Activated T-helper 2 cell treated with anti-CD3 and anti-CD28 coated beads, Interferon-gamma antibody, Interleukin-2, Interleukin-4, amounts not matched to agents 10 μg/mL and 5 μg/mL and 100 μg/mL, durations not matched to agents 14 hours and 24 hours and 36 hours (primary cell): ENCODE measurements at regions of chr11 and their contacts with region 1.

Region 1: DNA sequence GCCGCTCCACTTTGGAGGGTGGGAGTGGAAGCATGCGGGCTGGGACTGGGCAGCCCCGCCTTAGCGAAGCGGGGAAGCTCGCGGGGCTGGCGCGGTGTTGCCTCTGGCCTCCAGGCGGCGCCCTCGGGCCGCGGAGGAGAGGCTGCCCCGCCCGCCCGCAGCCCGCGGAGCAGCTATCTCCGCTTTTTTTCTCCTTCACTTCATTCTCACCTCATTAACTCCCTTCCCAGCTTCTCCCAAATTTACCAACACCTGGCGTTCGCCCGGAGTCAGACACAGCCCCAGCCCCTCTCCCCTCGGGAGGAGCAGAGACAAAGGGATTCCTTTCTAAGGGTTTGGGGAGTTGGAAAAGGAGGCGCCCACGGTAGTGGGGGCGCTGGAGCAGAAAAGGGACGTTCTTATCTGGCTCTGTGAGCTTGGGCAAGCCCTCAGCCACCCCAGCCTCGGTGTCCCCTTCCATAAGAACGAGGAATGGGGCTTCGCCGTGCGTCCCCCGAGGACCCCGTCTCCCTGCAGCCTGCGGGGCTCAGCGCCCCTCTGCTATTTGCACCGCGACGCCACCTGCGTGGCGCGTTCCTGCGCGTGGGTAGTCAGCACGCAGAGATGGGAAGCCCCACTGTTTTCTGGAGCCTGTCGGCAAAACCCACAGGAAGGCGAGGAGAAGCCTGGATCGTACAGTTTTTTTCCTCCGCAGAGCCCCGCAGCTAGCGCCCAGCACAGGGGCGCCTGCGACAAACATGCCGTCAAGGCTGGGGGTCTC is 1.5 kb upstream of the WNT11 start:
- DNase-seq: peak; percentile 70
- H3K4me3 Mint-ChIP-seq: peak overlapping the region; percentile 76
- H3K27ac Mint-ChIP-seq: no peak overlapping the region
- H3K4me1 Mint-ChIP-seq: peaks cover 9% of the 10 kb centered on the region
- H3K27me3 Mint-ChIP-seq: peaks cover 58% of the 10 kb centered on the region

Region 2: DNA sequence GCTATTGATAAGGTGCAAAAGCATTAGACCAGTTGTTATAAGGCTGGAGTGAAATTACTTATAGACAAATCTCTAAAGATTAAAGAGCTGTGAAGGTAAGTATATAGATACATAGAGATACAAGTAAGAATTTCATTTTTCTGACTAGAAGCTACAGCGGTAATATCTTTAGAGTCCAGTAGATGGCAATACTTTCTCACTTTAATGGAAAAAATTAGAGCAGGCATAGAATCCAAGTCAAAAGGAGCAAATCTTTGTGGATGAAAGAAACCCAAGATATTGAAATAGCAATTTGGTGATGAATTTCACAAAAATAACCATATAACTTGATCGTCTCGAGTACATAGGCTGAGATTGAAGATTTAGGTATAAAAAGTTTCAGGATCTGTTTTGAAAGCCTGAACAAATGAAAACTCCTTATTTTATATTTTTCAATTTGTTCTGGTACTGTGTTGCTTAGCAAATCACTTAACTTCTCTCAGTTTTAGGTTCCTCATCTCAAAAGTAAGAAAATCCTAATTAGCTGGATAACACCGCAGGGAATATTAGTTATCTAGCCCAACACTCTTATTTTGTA is 310.9 kb before region 1 on chr11:
- intact Hi-C with region 1: loop called (anchors 5 kb)
- DNase-seq: no peak
- H3K4me3 Mint-ChIP-seq: no peak overlapping the region
- H3K27ac Mint-ChIP-seq: no peak overlapping the region
- H3K4me1 Mint-ChIP-seq: peaks cover 25% of the 10 kb centered on the region
- H3K27me3 Mint-ChIP-seq: peaks cover 4% of the 10 kb centered on the region

Region 3: GRCh38 chr11:76318744-76319384 is 111.0 kb after region 1 on chr11:
- intact Hi-C with region 1: loop called (anchors 1 kb)
- DNase-seq: peak; percentile 70
- H3K4me3 Mint-ChIP-seq: no peak overlapping the region
- H3K27ac Mint-ChIP-seq: no peak overlapping the region
- H3K4me1 Mint-ChIP-seq: peaks cover 15% of the 10 kb centered on the region
- H3K27me3 Mint-ChIP-seq: peaks cover 29% of the 10 kb centered on the region

Region 4: DNA sequence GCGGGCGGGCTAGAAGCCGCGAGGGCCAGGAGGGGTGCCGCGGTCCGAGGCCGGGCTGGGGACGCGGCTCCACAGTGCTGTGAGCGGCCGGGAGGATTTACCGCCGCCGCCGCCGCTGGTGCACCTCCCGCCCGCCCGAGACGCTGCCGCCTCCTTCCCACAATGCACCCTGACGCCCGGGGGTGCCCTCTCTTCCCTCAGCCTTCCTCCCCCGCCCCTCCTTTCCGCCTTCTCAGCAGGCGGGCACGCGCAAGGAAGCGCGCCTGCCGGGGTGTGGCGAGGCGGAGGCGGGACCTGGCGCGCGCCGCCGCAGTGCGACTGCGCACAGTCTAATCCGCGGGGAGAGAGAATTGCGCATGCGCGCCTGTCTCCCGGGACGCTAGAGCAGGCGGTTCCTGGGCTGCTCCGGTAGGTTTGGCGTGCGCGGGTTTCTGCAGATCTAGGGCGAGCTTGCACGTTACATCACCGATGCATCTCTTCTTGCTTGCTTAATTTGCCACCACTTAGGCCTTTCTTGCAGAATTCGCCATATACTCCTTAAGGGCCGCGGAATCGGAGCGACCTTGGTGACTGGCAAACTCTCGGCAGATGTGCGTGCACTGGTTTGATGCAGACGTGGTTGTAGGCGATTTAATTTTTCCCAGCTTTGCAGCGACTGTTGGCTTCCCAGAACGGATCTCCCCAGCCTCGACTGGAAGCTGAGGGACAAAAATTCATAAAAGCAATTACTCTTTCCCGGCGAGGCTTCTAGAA is 173.3 kb after region 1 on chr11 and contains the starts of genes GVQW3 and THAP12:
- intact Hi-C with region 1: loop called (anchors 5 kb)
- DNase-seq: peak; percentile 96
- H3K4me3 Mint-ChIP-seq: peak within 1 kb of the TSS; percentile 95
- H3K27ac Mint-ChIP-seq: peak within 1 kb of the TSS; percentile 89
- H3K4me1 Mint-ChIP-seq: peaks cover 49% of the 10 kb centered on the region
- H3K27me3 Mint-ChIP-seq: no peaks in the 10 kb centered on the region
- total RNA-seq, gene GVQW3: 4.3 and 4.4 TPM in 2 replicates
- total RNA-seq, gene THAP12: 63.1 and 66.0 TPM in 2 replicates

Region 5: DNA sequence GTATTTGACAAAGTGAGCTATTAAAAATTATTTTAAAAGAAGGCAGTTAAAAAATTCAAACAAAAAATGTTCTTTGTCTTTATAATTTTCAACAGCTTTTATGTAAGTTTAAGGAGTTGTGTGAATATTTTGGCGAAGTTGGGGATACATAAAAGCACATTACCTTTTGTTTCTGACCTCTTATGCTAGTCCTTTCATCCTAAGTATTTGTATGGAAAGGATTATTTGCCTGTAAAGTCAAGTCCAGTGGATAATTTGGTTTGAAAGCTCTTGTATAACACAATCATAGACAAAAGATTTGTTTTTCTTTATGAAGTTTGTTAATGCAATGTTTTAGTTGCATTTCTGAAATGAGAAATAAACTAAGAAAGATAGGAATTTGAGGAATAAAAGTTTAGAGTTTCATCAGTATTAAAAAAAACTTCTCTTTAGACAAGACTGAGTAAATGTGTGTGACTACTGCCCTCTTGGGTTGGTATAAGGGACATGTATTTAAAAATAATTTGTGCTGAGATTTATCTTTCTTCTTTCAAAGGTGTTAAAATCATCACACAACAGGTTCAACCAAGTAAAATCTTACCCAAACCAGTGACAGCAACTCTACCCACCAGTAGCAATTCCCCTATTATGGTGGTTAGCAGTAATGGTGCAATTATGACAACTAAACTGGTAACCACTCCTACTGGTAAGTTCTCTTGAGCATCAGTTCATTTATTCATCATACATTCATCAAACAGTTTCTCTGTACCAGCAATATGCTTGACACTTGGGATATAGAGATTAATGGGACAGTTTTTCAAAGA is 305.2 kb after region 1 on chr11:
- intact Hi-C with region 1: loop called (anchors 5 kb)
- DNase-seq: no peak
- H3K4me3 Mint-ChIP-seq: no peak overlapping the region
- H3K27ac Mint-ChIP-seq: no peak overlapping the region
- H3K4me1 Mint-ChIP-seq: no peaks in the 10 kb centered on the region
- H3K27me3 Mint-ChIP-seq: no peaks in the 10 kb centered on the region

Region 6: DNA sequence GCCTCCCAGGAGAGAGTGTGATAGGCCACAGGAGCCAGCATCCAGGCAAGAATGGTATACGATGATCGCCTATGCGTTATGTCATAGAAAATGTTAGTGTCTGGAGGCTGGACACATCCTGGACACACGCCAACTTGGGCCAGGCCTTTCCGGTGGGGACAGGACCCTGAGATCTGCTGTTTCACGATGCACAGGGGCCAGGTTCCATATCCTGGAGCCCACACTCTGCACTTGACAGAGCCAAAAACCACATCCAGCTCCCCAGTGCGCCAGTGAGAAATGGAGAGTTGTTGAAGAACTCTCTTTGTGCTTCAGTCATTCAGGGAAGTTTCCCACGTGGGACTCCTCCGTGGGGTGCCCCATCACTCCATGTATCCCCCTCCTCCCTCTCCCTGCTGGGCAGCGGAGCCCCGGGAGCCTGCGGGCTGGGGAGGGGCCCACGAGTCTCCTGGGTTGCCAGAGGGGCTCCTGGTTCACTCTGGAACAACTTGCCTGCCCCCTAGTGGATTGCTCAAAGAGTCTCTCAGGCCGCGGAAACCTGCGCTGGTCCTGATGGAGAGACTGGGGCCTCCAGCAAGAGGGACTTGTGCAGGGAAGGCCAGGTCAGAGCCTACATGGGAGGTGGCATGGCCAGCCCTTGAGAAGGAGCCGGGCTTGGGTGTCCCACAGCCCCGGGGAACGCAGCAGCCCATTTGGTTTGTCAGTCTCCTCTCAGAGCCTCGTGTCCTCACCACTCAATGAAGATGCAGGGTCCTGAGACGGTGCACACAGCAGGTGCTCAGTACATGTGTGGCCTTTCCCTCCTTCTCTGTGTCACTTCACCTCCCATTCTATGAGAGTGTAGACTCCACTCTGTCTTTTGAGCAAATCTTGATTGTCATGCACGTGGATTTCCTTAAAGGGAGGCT is 472.9 kb after region 1 on chr11:
- intact Hi-C with region 1: loop called (anchors 5 kb)
- DNase-seq: peak; percentile 60
- H3K4me3 Mint-ChIP-seq: no peak overlapping the region
- H3K27ac Mint-ChIP-seq: no peak overlapping the region
- H3K4me1 Mint-ChIP-seq: peaks cover 40% of the 10 kb centered on the region
- H3K27me3 Mint-ChIP-seq: no peaks in the 10 kb centered on the region